Panc1 (cell line): ENCODE measurements at regions of chr6 and their contacts with region 1.

Region 1: GRCh38 chr6:87078983-87079616 is 15.8 kb downstream of the CGA start:
- DNase-seq: peak; percentile 42
- ATAC-seq: peak; percentile 98
- H3K4me3 ChIP-seq: no peak overlapping the region
- H3K27ac ChIP-seq: no peak overlapping the region
- H3K4me1 ChIP-seq: no peaks in the 10 kb centered on the region
- H3K27me3 ChIP-seq: peaks cover 6% of the 10 kb centered on the region; the same call in 1 of the 2 replicates
- CTCF ChIP-seq: peak; percentile 97

Region 2: DNA sequence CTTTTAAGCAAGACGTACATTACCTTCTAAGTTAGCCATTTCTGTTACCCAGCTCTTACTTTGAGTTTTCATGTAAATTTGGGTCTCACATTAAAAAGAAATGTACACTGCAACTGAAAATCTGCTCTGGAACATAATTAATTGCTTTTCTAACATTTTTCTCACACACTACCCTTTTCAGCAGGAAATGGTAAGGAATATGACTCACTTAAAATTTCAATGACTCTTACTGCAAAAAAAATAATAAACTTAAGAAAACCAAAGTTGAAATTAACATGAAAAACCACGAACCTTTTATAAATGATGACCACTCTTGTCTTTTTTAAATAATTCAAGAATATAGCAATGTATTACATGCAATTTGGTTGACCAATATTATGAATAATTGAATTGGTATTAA is 14.6 kb after region 1 on chr6:
- CTCF ChIA-PET with region 1: interaction called, 11 read pairs
- POLR2A ChIA-PET with region 1: no interaction called
- in situ Hi-C with region 1: no loop called
- intact Hi-C with region 1: no loop called
- DNase-seq: no peak
- ATAC-seq: no peak
- H3K4me3 ChIP-seq: no peak overlapping the region
- H3K27ac ChIP-seq: no peak overlapping the region
- H3K4me1 ChIP-seq: no peaks in the 10 kb centered on the region
- H3K27me3 ChIP-seq: peaks cover 34% of the 10 kb centered on the region
- CTCF ChIP-seq: no peak